Lower leg skin (tissue), 4 donors: ENCODE measurements at regions of chr14 and their contacts with region 1.

Region 1: GRCh38 chr14:91286530-91286937 is 42.0 kb upstream of the GPR68 start:
- DNase-seq: peak; percentile 75 to 95
- H3K4me3 ChIP-seq: no peak overlapping the region
- CTCF ChIP-seq: peak in 1 of 3 donors; percentile 83
- POLR2A ChIP-seq: no peak

Region 2: DNA sequence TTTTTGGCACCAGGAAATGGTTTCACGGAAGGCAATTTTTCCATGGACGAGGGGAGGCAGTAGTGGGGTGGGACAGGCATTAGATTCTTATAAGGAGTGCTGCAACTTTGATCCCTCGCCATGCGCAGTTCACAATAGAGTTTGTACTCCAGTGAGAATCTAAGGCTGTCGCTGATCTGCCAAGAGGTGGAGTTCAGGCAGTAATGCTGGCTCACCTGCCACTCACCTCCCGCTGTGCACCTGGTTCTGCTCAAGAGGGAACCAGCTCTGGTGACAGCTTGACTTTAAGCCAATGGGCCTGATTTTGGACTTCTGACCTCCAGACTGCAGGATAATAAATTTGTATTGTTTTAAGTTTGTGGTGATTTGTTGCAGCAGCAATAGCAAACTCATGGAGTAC is 389.5 kb before region 1 on chr14:
- intact Hi-C with region 1: loop called (anchors 5 kb)
- DNase-seq: no peak
- H3K4me3 ChIP-seq: no peak overlapping the region
- CTCF ChIP-seq: no peak
- POLR2A ChIP-seq: no peak

Region 3: DNA sequence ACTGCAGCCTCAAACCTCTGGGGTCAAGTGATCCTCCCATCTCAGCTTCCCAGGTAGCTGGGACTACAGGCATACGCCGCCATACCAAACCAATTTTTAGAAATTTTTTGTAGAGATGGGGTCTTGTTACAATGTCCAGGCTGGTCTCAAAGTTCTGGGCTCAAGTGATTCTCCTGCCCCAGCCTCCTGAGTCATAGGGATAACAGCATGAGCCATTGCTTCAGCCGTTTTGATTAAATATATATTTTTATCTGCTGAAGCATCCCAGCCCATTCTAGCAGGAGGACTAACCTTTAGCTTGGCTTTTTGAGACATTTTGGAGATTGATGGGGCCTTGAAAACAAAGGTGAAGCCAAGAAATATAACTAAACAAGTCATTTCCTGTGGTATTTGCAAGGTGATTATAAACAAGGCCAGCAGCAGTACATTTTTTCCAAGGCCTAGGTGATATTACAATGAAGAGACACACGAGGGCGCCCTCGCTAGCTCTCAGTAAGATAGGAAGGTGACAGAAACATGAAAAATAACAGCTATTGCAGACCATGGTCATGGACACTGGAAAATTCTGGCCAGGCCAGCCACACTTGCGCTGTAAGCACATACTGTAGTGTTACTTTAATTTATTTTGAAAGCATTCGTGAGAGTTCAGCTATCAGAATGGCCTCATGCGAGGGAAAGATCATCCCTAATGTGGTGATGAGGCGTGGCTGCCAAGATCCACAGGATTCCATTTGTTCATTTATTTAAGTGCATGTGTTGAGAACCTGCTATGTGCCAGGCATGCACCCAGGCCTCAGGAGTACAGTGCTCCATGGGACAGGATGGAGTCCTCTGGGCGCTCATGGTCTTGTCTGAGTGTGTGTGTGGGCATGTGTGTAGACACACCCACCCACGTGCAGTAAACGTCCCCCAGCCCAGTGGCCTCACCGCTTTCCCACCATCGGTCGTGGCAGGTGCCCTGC is 109.2 kb before region 1 on chr14:
- intact Hi-C with region 1: loop called (anchors 2 kb)
- DNase-seq: peak; percentile 51 to 89
- H3K4me3 ChIP-seq: no peak overlapping the region
- CTCF ChIP-seq: peak in 1 of 3 donors; percentile 51
- POLR2A ChIP-seq: no peak